A549 (cell line): ENCODE measurements at regions of chr2 and their contacts with region 1.

Region 1: GRCh38 chr2:205685314-205686055 is 3.2 kb downstream of the NRP2 start:
- DNase-seq: peak; percentile 48 to 60
- ATAC-seq: peak; percentile 60 to 66
- H3K4me3 ChIP-seq: peak overlapping the region; percentile 80
- H3K27ac ChIP-seq: peak overlapping the region; percentile 93 to 98
- H3K4me1 ChIP-seq: peaks cover 63% of the 10 kb centered on the region
- CTCF ChIP-seq: no peak
- EP300 ChIP-seq: no peak
- POLR2A ChIP-seq: 0 out of 2 replicates have a peak, but pooled peaks have one; percentile 6
- RAD21 ChIP-seq: no peak

Region 2: GRCh38 chr2:205612636-205613035 is 72.8 kb before region 1 on chr2:
- CTCF ChIA-PET with region 1: no interaction called
- POLR2A ChIA-PET with region 1: no interaction called
- DNase-seq: no peak
- ATAC-seq: no peak
- H3K4me3 ChIP-seq: no peak overlapping the region
- H3K27ac ChIP-seq: no peak overlapping the region
- H3K4me1 ChIP-seq: no peaks in the 10 kb centered on the region
- CTCF ChIP-seq: no peak
- EP300 ChIP-seq: no peak
- POLR2A ChIP-seq: no peak
- RAD21 ChIP-seq: no peak

Region 3: DNA sequence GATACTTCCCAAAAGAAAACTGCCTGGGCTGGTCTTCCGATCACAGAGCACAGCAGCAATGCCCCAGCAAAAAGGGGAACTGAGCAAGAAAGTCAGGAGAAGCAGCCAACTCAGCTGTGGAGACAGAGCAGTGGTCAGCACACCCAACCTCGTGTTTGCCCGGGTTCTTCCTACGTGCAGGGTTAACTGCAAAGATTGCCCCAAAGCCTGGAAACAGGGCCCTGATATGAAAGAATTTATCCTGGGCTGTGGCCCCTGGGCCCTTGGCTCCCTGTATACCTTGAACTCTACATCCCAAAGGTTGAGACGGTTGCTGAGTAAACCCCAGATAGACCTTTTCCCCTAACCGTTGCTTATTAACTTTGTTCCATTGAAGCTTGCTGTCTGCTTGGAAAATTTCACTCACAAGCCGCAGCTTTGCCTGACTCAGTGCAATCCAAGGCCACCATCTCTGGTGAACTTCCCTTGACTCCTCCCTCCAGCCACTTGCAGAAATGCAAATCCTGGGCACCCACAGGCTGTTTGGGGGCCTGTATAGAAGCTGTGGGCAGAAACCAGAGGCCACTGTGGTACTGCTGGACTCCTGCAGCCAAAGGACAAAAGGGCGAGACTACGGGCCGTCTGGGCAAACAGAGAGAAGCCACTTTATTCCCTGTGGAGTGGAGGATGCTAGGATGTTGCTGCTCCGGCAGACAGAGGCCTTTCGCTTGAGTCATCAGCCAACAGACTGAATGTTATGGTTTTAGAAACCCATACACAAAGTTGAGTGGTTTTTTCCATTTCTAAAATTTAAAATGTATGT is 15.0 kb after region 1 on chr2:
- CTCF ChIA-PET with region 1: interaction called, 33 read pairs
- POLR2A ChIA-PET with region 1: interaction called, 26 read pairs
- DNase-seq: peak; percentile 41 to 93
- ATAC-seq: peak; percentile 83 to 91
- H3K4me3 ChIP-seq: peak overlapping the region; percentile 24; the same call in 2 of the 3 replicates
- H3K27ac ChIP-seq: peak overlapping the region; percentile 93 to 95
- H3K4me1 ChIP-seq: peaks cover 100% of the 10 kb centered on the region
- CTCF ChIP-seq: no peak
- EP300 ChIP-seq: peak; percentile 62 to 76; a peak in 3 of 5 replicates
- POLR2A ChIP-seq: no peak
- RAD21 ChIP-seq: peak in 1 of 2 experiments; percentile 46; a peak in 3 of 5 replicates

Region 4: GRCh38 chr2:205706769-205707381 is 21.4 kb after region 1 on chr2:
- CTCF ChIA-PET with region 1: interaction called, 14 read pairs
- POLR2A ChIA-PET with region 1: interaction called, 26 read pairs
- DNase-seq: peak in 1 of 2 experiments; percentile 77
- ATAC-seq: peak; percentile 81 to 88
- H3K4me3 ChIP-seq: no peak overlapping the region
- H3K27ac ChIP-seq: peak overlapping the region; percentile 93 to 95
- H3K4me1 ChIP-seq: peaks cover 87% of the 10 kb centered on the region
- CTCF ChIP-seq: no peak
- EP300 ChIP-seq: no peak
- POLR2A ChIP-seq: no peak
- RAD21 ChIP-seq: no peak

Region 5: GRCh38 chr2:206241736-206242135 is 556.3 kb after region 1 on chr2:
- CTCF ChIA-PET with region 1: no interaction called
- POLR2A ChIA-PET with region 1: no interaction called
- DNase-seq: no peak
- ATAC-seq: no peak
- H3K4me3 ChIP-seq: no peak overlapping the region
- H3K27ac ChIP-seq: no peak overlapping the region
- H3K4me1 ChIP-seq: no peaks in the 10 kb centered on the region
- CTCF ChIP-seq: no peak
- EP300 ChIP-seq: no peak
- POLR2A ChIP-seq: no peak
- RAD21 ChIP-seq: no peak